WTC11 (cell line): ENCODE measurements at regions of chr6 and their contacts with region 1.

Region 1: DNA sequence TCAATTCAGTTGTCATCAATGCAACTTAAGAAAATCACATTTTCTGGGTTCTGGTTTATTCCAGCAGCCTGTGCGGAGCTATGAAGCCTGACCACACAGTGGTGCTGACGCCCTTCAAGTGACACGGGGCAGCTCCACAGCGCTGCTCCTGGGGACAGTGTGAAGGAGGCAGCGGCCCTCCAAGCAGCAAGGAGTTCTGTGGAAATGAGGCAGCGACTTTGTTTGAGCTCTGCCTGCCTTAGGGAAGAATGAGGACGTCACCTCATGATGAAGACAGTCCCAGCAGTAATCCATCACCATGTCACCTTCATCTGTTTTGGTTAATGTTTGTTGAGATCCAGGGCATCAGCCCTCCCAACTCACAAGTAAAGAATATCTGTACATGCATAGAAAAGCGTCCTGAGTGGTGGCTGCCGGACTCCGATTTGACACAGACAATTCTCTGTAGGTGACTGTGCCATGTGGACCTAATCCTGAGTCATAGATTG is 168.5 kb upstream of the UST start:
- DNase-seq: peak; percentile 85
- ATAC-seq: peak; percentile 100
- H3K4me3 Mint-ChIP-seq: no peak overlapping the region
- H3K27ac Mint-ChIP-seq: no peak overlapping the region
- H3K4me1 Mint-ChIP-seq: peaks cover 33% of the 10 kb centered on the region
- H3K27me3 Mint-ChIP-seq: peaks cover 6% of the 10 kb centered on the region; the same call in 1 of the 2 replicates
- CTCF ChIP-seq: no peak

Region 2: DNA sequence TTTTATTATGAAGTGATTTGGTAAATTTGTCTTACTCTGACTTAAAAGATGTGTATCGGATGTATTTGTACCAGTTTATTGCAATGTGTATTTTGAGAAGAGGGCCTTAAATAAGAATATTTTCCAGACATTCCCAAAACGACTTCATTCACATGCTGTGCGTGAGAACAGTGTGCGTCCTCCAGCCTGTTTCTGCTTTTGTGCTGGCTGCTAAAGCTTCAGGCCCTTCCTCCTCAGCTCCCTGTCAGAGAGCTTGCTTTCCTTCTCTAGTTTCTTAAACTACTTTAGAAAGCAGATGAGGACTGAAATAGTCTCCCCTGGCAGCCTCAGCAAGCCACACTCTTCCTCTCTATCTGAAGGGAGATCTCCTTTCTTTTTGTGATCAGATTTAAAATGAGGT is 912.0 kb before region 1 on chr6:
- CTCF ChIA-PET with region 1: no interaction called
- POLR2A ChIA-PET with region 1: no interaction called
- DNase-seq: no peak
- ATAC-seq: peak; percentile 60
- H3K4me3 Mint-ChIP-seq: no peak overlapping the region
- H3K27ac Mint-ChIP-seq: peak overlapping the region; percentile 27; the same call in 1 of the 2 replicates
- H3K4me1 Mint-ChIP-seq: peaks cover 33% of the 10 kb centered on the region
- H3K27me3 Mint-ChIP-seq: no peaks in the 10 kb centered on the region; the same call in 1 of the 2 replicates
- CTCF ChIP-seq: no peak

Region 3: DNA sequence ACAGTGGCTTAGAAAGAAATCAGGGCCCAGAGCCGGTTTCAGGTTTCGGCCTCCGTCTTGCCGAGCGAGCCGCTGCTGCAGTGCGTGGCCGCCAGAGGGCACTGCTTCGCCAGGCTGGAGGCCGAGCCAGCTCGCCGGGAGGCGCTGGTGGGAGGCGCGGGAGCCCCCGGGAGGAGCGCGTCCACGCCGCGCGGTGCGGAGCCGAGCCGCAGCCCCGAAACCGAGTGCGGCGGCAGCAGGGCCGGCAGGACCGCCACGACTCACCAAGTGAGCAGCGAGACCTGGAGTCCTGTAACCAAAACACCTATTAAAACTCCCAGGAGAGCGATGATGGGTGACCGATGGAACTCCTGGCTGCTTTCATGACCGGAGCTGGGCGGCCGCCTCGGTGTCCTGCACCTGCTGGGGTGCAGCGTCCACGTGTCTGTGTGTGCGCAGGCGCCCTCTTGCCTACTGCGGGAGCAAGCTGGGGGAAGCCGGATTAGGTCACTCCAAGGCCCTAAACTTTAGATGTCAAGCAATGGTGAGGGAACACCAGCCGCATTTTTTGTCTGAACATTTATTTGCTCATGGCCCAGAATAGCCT is 18.3 kb before region 1 on chr6:
- CTCF ChIA-PET with region 1: interaction called, 32 read pairs
- POLR2A ChIA-PET with region 1: no interaction called
- DNase-seq: peak; percentile 85
- ATAC-seq: peak; percentile 86
- H3K4me3 Mint-ChIP-seq: peak overlapping the region; percentile 36; the same call in 1 of the 2 replicates
- H3K27ac Mint-ChIP-seq: no peak overlapping the region
- H3K4me1 Mint-ChIP-seq: 0 out of 2 replicates have a peak, but pooled peaks cover 6% of the 10 kb centered on the region
- H3K27me3 Mint-ChIP-seq: peaks cover 21% of the 10 kb centered on the region
- CTCF ChIP-seq: peak; percentile 94

Region 4: DNA sequence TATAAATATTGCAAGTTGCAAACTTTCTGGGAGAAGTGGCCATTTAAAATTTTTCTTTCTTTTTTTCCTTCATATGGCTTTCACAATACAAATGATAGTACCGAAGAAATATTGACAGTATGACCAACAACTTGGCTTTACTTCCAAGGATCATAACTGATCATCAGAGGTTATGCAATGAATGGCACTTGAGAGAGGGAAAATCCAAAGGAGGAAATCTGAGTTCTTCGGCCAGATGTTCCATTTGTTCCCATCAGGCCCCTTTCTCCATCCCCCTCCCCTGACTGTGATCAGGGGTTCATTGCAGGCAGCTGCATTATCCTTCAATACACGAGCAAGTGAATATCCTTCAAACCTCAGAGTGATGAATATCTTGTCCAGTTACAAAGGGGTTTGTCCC is 38.6 kb after region 1 on chr6:
- CTCF ChIA-PET with region 1: no interaction called
- POLR2A ChIA-PET with region 1: no interaction called
- DNase-seq: no peak
- ATAC-seq: no peak
- H3K4me3 Mint-ChIP-seq: no peak overlapping the region
- H3K27ac Mint-ChIP-seq: no peak overlapping the region
- H3K4me1 Mint-ChIP-seq: peaks cover 6% of the 10 kb centered on the region
- H3K27me3 Mint-ChIP-seq: no peaks in the 10 kb centered on the region; the same call in 1 of the 2 replicates
- CTCF ChIP-seq: no peak

Region 5: DNA sequence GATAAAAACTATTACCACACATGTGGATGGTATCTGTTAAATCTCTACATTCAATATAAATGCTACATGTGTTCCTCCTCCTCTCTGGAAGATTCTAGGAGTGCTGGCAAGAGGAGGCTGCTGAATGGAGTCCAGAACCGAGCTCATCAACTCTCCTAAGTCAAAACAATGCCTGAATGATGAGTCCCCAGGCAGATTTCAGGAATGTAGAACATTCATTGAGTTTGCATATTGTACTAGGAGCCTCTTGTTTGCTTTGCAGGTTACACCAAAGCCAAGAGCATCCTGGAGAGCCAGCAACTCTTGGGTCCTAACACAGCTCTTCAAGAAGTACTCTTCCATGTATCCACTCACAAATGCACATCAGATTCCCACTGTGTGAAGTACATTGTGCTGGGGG is 50.9 kb after region 1 on chr6:
- CTCF ChIA-PET with region 1: interaction called, 13 read pairs
- POLR2A ChIA-PET with region 1: no interaction called
- DNase-seq: no peak
- ATAC-seq: peak; percentile 44; the same call in 1 of the 2 replicates
- H3K4me3 Mint-ChIP-seq: no peak overlapping the region
- H3K27ac Mint-ChIP-seq: peak overlapping the region; percentile 3; the same call in 1 of the 2 replicates
- H3K4me1 Mint-ChIP-seq: peaks cover 29% of the 10 kb centered on the region
- H3K27me3 Mint-ChIP-seq: no peaks in the 10 kb centered on the region; the same call in 1 of the 2 replicates
- CTCF ChIP-seq: no peak

Region 6: DNA sequence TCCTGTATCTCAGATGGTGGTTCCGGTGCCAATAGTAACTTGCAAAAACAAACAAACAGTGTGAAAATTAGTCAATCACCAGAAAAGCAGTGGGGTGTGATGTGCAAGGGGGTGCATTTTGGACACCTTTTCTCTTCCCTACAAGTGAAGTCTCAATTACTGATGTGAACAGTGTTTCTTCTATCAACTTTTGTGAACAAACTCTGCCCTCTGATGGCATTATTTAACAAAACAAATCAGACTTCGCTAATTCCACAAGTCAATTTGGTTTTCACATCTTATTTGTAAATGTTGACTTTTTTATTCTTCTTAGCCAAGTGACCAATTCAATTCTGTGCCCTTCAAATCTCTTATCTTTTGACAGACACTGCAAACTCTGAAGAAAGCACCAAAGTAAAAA is 380.7 kb after region 1 on chr6:
- CTCF ChIA-PET with region 1: interaction called, 10 read pairs
- POLR2A ChIA-PET with region 1: no interaction called
- DNase-seq: no peak
- ATAC-seq: no peak
- H3K4me3 Mint-ChIP-seq: no peak overlapping the region
- H3K27ac Mint-ChIP-seq: peak overlapping the region; percentile 57; the same call in 1 of the 2 replicates
- H3K4me1 Mint-ChIP-seq: peaks cover 63% of the 10 kb centered on the region
- H3K27me3 Mint-ChIP-seq: no peaks in the 10 kb centered on the region
- CTCF ChIP-seq: no peak

Region 7: DNA sequence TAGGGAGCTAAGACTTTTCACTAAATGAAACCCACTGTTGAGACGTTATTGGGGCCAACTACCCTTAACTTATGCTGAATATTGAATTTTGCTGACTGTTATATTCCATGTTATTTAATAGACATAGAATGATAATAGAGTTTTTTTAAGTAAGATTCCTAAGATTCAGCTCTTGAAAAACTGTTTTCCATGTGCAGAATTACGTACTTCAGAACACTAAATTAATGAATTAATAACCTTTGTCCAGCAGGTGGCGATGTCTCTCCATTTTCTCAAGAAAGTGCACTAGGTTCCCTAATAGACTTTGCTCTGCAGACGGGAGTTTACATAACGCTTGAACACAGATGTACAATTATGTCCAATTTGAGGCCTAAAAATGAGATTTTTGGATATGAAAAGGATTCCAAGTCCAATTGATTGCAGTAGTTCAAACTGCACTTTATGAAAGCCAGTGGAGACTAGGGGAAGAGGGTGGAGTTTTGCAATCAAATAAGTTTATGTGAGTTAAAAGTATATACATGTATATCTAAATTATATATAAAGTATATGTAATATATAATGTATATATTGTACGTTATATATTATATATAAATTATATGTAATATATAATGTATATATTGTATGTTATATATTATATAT is 450.6 kb after region 1 on chr6:
- CTCF ChIA-PET with region 1: interaction called, 49 read pairs
- POLR2A ChIA-PET with region 1: no interaction called
- DNase-seq: no peak
- ATAC-seq: no peak
- H3K4me3 Mint-ChIP-seq: no peak overlapping the region
- H3K27ac Mint-ChIP-seq: no peak overlapping the region
- H3K4me1 Mint-ChIP-seq: peaks cover 28% of the 10 kb centered on the region
- H3K27me3 Mint-ChIP-seq: no peaks in the 10 kb centered on the region
- CTCF ChIP-seq: peak; percentile 63; the same call in 1 of the 2 replicates